Right cardiac atrium (tissue), 5 donors: ENCODE measurements at regions of chr4 and their contacts with region 1.

Region 1: DNA sequence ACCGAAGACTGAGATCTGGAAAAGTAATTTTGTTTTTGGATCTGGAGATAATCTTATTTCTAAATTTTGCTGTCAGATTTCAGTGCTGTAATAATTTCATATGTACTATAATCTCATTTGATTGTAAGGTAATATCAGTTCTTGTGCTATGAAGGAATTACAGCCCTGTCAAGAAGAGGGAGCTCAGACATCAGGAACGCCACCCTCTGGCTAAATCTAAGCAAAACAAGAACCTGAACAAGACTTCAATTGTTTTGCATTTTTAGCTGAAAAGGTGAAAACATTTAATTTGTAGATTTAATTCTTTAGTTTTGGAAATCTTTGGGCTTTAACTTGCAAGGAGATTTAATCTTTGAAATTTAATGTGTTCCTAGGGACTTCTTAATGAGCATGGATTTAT is 525.4 kb upstream of the HS3ST1 start:
- DNase-seq: no peak
- ATAC-seq: peak in 1 of 2 donors; percentile 82
- H3K4me3 ChIP-seq: no peak overlapping the region
- H3K27ac ChIP-seq: no peak overlapping the region
- H3K4me1 ChIP-seq: peaks cover 2% of the 10 kb centered on the region
- H3K27me3 ChIP-seq: no peaks in the 10 kb centered on the region

Region 2: DNA sequence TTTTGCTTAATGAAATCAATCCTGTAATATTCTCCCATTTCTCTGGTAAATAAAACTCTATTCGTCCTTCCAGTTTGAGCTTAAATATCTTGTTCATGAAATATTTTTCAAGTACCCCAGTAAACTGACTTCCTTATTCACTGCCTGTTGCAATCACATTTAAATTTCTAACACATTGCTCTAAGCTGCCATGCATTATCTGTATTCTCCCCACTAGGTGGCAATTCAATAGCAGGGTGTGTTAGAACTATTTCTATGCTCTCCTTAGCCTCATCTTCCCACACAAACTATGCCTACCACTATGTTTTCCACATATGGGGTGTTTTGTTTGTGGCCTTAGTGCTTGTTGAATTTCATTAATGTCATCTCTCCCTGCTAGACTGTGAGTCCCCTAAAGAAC is 148.3 kb before region 1 on chr4:
- intact Hi-C with region 1: loop called in 3 of 4 experiments (anchors 10 kb)
- DNase-seq: no peak
- ATAC-seq: peak; percentile 82 to 85
- H3K4me3 ChIP-seq: no peak overlapping the region
- H3K27ac ChIP-seq: no peak overlapping the region
- H3K4me1 ChIP-seq: no peaks in the 10 kb centered on the region
- H3K27me3 ChIP-seq: no peaks in the 10 kb centered on the region

Region 3: DNA sequence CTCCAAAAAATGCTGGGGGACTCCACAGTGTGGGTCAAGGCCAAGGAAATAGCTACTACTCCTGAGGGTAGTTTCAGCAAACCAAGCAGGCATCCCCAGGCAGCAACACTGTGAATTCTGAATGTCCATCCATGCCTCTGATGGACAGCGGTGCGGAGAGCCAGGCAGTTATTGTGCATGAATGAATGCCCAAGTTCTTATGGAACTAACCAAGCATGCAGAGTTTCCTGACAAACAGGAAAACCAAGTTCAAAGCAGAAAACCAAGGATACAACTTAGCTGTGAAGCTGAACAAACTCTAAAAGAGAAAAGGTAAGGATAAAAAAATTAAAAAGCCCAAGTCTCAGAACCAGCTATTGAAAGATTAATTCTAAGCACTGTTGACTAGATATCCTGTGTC is 117.2 kb after region 1 on chr4:
- intact Hi-C with region 1: no loop called
- DNase-seq: no peak
- ATAC-seq: no peak
- H3K4me3 ChIP-seq: no peak overlapping the region
- H3K27ac ChIP-seq: no peak overlapping the region
- H3K4me1 ChIP-seq: peaks cover 4% of the 10 kb centered on the region
- H3K27me3 ChIP-seq: no peaks in the 10 kb centered on the region

Region 4: GRCh38 chr4:12084690-12085089 is 130.6 kb after region 1 on chr4:
- intact Hi-C with region 1: no loop called
- DNase-seq: no peak
- ATAC-seq: no peak
- H3K4me3 ChIP-seq: no peak overlapping the region
- H3K27ac ChIP-seq: no peak overlapping the region
- H3K4me1 ChIP-seq: no peaks in the 10 kb centered on the region
- H3K27me3 ChIP-seq: no peaks in the 10 kb centered on the region